ENCODE measurements at regions of chr12 and their contacts with region 1.

Region 1: GRCh38 chr12:118307069-118307954 is 65.4 kb downstream of the TAOK3 start:
- DNase-seq: peak; percentile 84
- H3K4me3 ChIP-seq: peak overlapping the region; percentile 32 to 39 (median 36)
- H3K27ac ChIP-seq: peak overlapping the region; percentile 86
- H3K4me1 ChIP-seq: peaks cover 35% of the 10 kb centered on the region
- H3K27me3 ChIP-seq: no peaks in the 10 kb centered on the region
- CTCF ChIP-seq: no peak

Region 2: DNA sequence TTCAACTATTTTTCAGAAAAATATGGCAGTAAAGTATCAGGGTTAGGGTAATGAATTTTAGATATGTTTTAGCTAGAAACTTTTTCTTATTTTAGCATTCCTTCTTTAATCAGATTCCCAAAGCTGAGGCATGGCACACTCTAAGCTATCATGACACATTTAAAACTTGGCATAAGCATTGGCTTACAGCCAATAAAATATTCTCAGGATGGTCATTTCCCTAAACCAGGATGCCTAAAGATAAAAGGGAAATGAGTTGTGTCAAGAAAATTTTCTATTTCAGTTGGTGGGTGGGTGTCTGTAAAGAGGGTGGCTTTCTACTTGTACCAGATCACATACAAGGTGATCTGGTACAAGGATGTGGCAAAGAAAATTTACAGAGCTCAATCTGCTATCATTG is 123.6 kb before region 1 on chr12:
- CTCF ChIA-PET with region 1: no interaction called
- dilution Hi-C with region 1: no loop called
- in situ Hi-C with region 1: no loop called
- intact Hi-C with region 1: loop called (anchors 2 kb)
- DNase-seq: no peak
- H3K4me3 ChIP-seq: no peak overlapping the region
- H3K27ac ChIP-seq: no peak overlapping the region
- H3K4me1 ChIP-seq: peaks cover 15% of the 10 kb centered on the region
- H3K27me3 ChIP-seq: no peaks in the 10 kb centered on the region
- CTCF ChIP-seq: no peak

Region 3: GRCh38 chr12:118237052-118237665 is 70.2 kb before region 1 on chr12:
- CTCF ChIA-PET with region 1: no interaction called
- dilution Hi-C with region 1: no loop called
- in situ Hi-C with region 1: no loop called
- intact Hi-C with region 1: loop called (anchors 2 kb)
- DNase-seq: no peak
- H3K4me3 ChIP-seq: no peak overlapping the region
- H3K27ac ChIP-seq: peak overlapping the region; percentile 67
- H3K4me1 ChIP-seq: peaks cover 23% of the 10 kb centered on the region
- H3K27me3 ChIP-seq: no peaks in the 10 kb centered on the region
- CTCF ChIP-seq: no peak

Region 4: GRCh38 chr12:118271790-118272417 is 35.4 kb before region 1 on chr12:
- CTCF ChIA-PET with region 1: no interaction called
- dilution Hi-C with region 1: no loop called
- in situ Hi-C with region 1: no loop called
- intact Hi-C with region 1: loop called (anchors 1 kb)
- DNase-seq: peak; percentile 83
- H3K4me3 ChIP-seq: peak overlapping the region in 2 of 3 experiments; percentile 24 to 40
- H3K27ac ChIP-seq: peak overlapping the region; percentile 77
- H3K4me1 ChIP-seq: peaks cover 16% of the 10 kb centered on the region
- H3K27me3 ChIP-seq: no peaks in the 10 kb centered on the region
- CTCF ChIP-seq: no peak

Region 5: DNA sequence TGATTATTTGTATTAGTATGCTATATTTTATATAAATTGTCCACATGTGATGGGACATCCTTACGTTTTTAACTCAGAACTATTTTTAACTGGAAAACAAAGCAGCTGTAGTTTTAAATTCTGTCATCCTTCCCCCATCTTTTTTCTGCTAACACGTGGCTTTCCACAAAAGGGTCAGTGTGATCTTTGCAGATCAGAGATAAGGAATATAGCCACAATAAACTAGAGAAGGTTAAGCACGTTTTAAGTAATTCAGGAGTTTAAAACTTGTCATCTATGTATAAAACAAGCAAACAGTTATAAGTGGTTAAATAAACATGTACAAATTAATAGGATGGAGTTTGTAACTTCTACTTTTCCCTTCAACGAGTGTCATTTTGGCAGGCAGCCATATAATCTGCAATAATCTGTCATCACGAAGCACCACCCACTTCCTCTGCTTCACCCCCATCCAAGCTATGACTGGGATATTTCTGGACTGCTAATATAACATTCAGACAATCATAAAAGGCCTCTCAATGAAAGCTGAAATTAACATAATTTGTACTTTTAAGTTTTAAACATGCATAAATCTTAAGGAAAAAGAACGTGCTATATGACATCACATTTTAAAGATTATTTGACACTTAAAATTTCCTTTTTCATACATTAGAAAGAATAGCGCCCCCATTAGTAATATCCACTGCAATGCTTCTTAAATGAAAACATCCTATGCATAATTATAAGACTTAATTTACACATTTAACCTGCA is 50.1 kb after region 1 on chr12:
- CTCF ChIA-PET with region 1: no interaction called
- dilution Hi-C with region 1: loop called (anchors 5 kb)
- in situ Hi-C with region 1: no loop called
- intact Hi-C with region 1: loop called (anchors 2 kb)
- DNase-seq: peak; percentile 54
- H3K4me3 ChIP-seq: no peak overlapping the region
- H3K27ac ChIP-seq: peak overlapping the region; percentile 94
- H3K4me1 ChIP-seq: peaks cover 28% of the 10 kb centered on the region
- H3K27me3 ChIP-seq: no peaks in the 10 kb centered on the region
- CTCF ChIP-seq: peak in 1 of 2 donors; percentile 15

Measured in mammary epithelial cell (primary cell).